ENCODE measurements at regions of chr6 and their contacts with region 1.

Region 1: GRCh38 chr6:14144678-14145113 is 27.1 kb downstream of the CD83 start:
- H3K4me3 Mint-ChIP-seq: no peak overlapping the region
- H3K27ac Mint-ChIP-seq: peak overlapping the region; percentile 42
- H3K4me1 Mint-ChIP-seq: peaks cover 23% of the 10 kb centered on the region
- H3K27me3 Mint-ChIP-seq: peaks cover 8% of the 10 kb centered on the region

Region 2: GRCh38 chr6:13908955-13909381 is 235.7 kb before region 1 on chr6:
- intact Hi-C with region 1: loop called (anchors 2 kb)
- H3K4me3 Mint-ChIP-seq: no peak overlapping the region
- H3K27ac Mint-ChIP-seq: no peak overlapping the region
- H3K4me1 Mint-ChIP-seq: no peaks in the 10 kb centered on the region
- H3K27me3 Mint-ChIP-seq: peaks cover 21% of the 10 kb centered on the region

Region 3: DNA sequence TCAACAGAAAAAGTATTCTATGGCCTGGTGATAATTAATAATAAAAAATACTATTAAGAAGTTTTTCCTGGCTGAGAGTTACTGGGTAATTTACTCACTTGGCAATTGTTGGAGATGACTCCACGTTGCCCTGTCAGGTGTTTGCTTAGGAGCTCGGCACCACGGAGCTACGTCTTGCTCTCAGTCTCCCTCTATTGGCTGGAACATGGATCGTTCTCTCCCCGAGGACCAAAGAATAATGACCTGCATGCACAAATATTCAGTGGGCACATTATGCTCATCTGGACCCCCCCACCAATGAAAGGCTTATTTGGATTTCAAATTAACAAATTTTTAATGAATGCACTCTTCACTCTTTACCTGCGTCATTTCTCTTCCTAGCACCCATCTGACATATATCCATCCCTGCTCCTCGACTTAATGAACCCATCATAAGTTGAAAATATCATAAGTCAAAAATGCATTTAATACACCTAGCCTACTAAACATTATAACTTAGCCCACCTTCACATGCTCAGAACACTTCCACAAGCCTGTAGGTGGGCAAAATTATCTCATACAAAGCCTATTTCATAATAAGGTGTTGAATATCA is 98.1 kb before region 1 on chr6:
- intact Hi-C with region 1: loop called (anchors 5 kb)
- H3K4me3 Mint-ChIP-seq: no peak overlapping the region
- H3K27ac Mint-ChIP-seq: no peak overlapping the region
- H3K4me1 Mint-ChIP-seq: no peaks in the 10 kb centered on the region
- H3K27me3 Mint-ChIP-seq: peaks cover 33% of the 10 kb centered on the region

Region 4: DNA sequence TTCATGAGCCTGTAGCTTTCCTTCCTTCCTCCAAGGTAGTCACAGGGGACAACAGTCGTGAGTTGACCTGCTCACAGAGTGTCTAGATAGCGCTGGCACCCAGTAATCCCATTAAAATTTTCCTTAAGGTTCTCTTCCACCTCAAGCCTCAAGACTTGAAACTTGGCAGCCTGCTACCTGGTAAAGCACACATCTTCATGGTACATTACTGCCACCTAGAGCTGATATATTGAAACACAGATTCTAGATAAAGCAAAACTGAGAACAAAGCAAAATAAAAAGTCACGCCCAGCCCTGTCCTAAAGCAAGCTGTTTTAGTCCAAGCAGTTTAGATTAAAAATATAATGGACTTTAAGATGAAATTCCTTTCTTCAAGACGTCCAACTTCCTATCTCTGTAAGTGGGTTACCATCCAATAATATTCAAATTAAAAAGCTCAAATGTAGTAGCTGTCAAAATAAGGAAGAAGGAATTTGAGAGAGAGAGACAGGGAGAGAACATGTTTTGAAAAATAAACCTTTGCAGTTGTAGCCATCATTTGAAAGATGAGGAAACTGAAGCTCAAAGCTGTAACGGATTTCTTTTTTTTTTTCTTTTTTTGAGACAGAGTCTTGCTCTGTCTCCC is 77.8 kb before region 1 on chr6:
- intact Hi-C with region 1: loop called (anchors 5 kb)
- H3K4me3 Mint-ChIP-seq: no peak overlapping the region
- H3K27ac Mint-ChIP-seq: peak overlapping the region; percentile 27
- H3K4me1 Mint-ChIP-seq: peaks cover 24% of the 10 kb centered on the region
- H3K27me3 Mint-ChIP-seq: peaks cover 32% of the 10 kb centered on the region

Measured in dendritic cell treated with granulocyte-macrophage colony-stimulating factor and Interleukin-4, amounts not matched to agents 40 ng/mL and 50 ng/mL, for 4 days (primary cell).